ENCODE measurements at regions of chr7 and their contacts with region 1.

Region 1: DNA sequence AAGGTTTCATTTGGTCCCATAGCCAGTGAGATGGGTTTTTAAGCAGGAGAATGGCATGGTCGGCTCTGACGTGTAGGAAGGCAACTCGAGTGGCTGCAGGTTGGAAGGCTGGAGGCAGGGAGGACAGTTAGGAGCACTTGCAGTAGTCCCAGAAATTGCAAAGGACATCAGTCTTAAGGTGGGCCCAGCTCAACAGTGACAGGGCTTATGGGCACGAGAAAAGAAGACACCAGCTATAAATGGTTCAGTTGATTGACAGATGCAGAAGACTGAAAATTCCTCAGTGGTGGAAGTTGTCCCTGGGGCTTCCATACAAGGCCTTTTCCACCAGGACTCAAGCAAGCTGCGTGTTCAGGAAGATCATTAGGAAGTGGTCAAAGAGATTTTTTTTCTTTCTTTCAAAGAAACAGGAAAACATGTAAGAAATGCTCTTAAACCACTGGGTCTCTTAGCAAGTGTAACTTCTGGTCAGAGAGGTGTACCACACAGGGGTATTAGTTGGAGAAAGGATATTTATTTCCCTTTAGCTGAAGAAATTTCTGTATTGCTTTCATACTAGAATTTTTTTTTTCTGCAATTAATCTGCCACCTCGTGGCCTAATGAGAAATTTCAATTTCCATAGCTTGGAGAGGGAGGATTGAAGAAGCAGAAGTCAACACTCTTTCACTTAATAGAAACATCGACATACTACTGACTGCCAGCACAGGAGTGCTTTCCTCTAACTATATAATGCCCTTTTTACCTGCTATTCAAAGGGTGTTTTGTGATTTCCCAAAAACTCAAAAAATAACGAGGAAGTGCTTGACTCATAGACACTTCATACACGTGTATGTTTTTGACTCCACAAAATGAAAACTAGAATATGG is 177.4 kb upstream of the NAMPT start:
- DNase-seq: no peak

Region 2: DNA sequence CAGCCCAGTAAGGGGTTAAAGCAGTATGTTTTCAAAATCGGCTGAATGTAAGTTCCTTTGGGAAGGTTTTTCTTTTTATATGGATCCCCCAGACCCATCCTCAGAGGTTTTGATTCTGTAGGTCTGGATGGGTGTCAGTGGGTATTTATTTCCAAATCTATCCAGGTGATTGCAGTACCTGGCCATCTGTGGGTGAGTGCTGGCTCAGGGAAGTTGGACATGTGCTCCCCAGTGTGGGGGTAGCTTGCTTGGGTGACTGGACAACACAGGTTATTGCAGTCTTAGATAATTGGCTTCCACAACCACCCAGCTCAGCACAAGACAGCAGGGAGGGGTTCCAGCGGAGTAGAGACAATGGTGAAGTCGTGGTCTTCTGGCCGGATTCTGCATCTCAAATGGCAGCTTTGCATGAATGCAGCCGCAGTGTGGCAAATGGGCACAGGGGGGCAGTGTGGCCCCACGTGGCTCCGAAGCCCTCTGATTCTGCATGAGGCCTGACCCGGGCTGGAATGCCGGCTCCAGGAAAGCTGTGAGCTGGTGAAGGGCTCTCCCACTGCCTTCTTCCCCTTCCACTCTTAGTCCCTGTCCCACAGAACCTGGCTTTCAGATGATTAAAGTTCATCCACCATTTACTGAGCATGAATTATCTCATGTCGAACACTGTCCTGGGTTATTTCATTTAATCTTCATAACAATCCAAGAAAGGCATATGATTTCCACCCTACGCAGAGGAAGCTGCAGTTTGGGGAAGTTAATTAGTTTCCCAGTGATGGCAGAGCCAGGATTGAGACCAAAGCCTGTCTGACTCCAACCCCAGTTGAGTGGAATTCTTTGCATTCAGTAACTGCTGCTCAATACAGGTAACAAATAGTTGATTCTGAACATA is 285.6 kb before region 1 on chr7:
- CTCF ChIA-PET with region 1: interaction called, 36 read pairs
- POLR2A ChIA-PET with region 1: no interaction called
- DNase-seq: peak; percentile 88